ENCODE measurements at regions of chr4 and their contacts with region 1.

Region 1: GRCh38 chr4:143531380-143531779 is 17.9 kb downstream of the SMARCA5 start:
- DNase-seq: no peak
- ATAC-seq: no peak
- H3K4me3 Mint-ChIP-seq: no peak overlapping the region
- H3K27ac Mint-ChIP-seq: no peak overlapping the region
- H3K4me1 Mint-ChIP-seq: no peaks in the 10 kb centered on the region
- H3K27me3 Mint-ChIP-seq: no peaks in the 10 kb centered on the region
- CTCF ChIP-seq: no peak

Region 2: GRCh38 chr4:143549928-143550327 is 18.5 kb after region 1 on chr4:
- CTCF ChIA-PET with region 1: no interaction called
- POLR2A ChIA-PET with region 1: no interaction called
- intact Hi-C with region 1: loop called (anchors 2 kb)
- DNase-seq: no peak
- ATAC-seq: no peak
- H3K4me3 Mint-ChIP-seq: no peak overlapping the region
- H3K27ac Mint-ChIP-seq: no peak overlapping the region
- H3K4me1 Mint-ChIP-seq: peaks cover 8% of the 10 kb centered on the region
- H3K27me3 Mint-ChIP-seq: no peaks in the 10 kb centered on the region
- CTCF ChIP-seq: no peak

Region 3: GRCh38 chr4:143667461-143667860 is 136.1 kb after region 1 on chr4:
- CTCF ChIA-PET with region 1: no interaction called
- POLR2A ChIA-PET with region 1: no interaction called
- intact Hi-C with region 1: no loop called
- DNase-seq: no peak
- ATAC-seq: no peak
- H3K4me3 Mint-ChIP-seq: no peak overlapping the region
- H3K27ac Mint-ChIP-seq: no peak overlapping the region
- H3K4me1 Mint-ChIP-seq: no peaks in the 10 kb centered on the region
- H3K27me3 Mint-ChIP-seq: no peaks in the 10 kb centered on the region
- CTCF ChIP-seq: no peak

Measured in activated B cell treated with CpG ODN at 0.5 μM for 24 hours (primary cell).